SK-N-SH (cell line): ENCODE measurements at regions of chr15 and their contacts with region 1.

Region 1: GRCh38 chr15:89177633-89178306 is 43.6 kb downstream of the RLBP1 start:
- DNase-seq: peak; percentile 55
- H3K4me3 ChIP-seq: peak overlapping the region in 1 of 2 experiments; percentile 9; a peak in 1 of 4 replicates
- H3K27ac ChIP-seq: no peak overlapping the region
- H3K4me1 ChIP-seq: peaks cover 0 to 2% of the 10 kb centered on the region in 2 experiments; a peak in 1 of 4 replicates
- H3K27me3 ChIP-seq: no peaks in the 10 kb centered on the region
- CTCF ChIP-seq: peak; percentile 94
- EP300 ChIP-seq: no peak
- RAD21 ChIP-seq: peak; percentile 85

Region 2: DNA sequence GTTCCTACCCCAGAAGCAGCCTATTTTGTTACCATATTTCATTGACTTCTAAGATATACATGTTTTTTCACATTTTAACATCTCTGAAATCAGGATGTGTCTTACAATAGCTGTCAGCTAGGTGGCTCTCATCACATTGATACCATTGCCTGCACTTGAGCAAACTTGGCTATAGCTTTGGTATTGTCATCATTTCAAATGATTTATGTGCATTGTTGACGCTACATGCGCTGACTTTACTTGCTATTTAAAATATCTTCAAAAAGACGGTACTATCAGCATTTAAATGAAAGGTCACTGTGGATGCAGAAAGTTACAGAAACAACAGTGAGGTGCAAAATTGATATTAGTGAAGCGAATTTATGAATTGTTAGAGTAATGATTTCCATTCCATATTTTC is 143.5 kb before region 1 on chr15:
- CTCF ChIA-PET with region 1: interaction called, 12 read pairs
- POLR2A ChIA-PET with region 1: no interaction called
- DNase-seq: no peak
- H3K4me3 ChIP-seq: no peak overlapping the region
- H3K27ac ChIP-seq: no peak overlapping the region
- H3K4me1 ChIP-seq: no peaks in the 10 kb centered on the region
- H3K27me3 ChIP-seq: no peaks in the 10 kb centered on the region; the same call in 1 of the 2 replicates
- CTCF ChIP-seq: peak; percentile 47
- EP300 ChIP-seq: no peak
- RAD21 ChIP-seq: peak; percentile 56

Region 3: GRCh38 chr15:89087830-89088604 is 89.8 kb before region 1 on chr15 and contains the start of gene ABHD2:
- CTCF ChIA-PET with region 1: interaction called, 30 read pairs
- POLR2A ChIA-PET with region 1: no interaction called
- DNase-seq: peak; percentile 90
- H3K4me3 ChIP-seq: peak within 1 kb of the TSS; percentile 85 to 97
- H3K27ac ChIP-seq: peak within 1 kb of the TSS; percentile 97 to 98
- H3K4me1 ChIP-seq: peaks cover 31 to 70% of the 10 kb centered on the region in 2 experiments
- H3K27me3 ChIP-seq: no peaks in the 10 kb centered on the region
- CTCF ChIP-seq: no peak
- EP300 ChIP-seq: peak in 1 of 2 experiments; percentile 78; a peak in 3 of 4 replicates
- RAD21 ChIP-seq: no peak
- polyA plus RNA-seq, gene ABHD2: 19.2 and 25.7 TPM in 2 replicates

Region 4: DNA sequence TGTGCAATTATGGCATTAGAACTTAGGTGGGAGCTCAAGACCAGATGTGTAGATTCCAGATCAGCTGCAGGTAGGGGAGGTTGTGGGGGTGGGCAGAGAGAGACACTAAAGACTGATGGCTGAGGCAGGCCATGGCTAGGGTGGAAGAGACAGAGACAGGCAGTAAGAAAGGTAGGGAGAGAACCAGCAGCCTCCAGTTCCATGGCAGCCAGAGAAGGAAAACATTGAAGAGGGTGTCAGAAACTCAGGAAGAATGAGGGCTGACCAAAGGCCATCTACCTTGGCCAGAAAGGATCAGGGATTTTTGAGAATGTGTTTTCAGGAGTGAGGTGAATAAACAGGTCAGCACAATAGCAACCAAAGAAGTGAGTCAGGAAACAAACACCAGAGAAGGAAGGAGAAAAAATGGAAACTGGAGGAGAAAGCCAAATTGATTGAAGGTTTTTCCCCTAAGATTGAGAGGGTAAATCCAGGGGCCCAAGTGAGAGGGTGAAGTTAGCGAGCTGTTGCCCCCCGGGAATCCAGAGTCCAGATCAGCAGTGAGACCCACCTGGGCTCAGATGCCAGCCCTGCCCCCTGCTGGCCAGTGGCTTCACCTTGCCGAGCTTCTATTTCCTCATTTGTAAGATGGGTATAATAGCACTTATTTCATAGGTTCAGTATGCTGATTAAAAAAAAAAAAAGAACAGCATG is 48.5 kb before region 1 on chr15:
- CTCF ChIA-PET with region 1: interaction called, 27 read pairs
- POLR2A ChIA-PET with region 1: no interaction called
- DNase-seq: peak; percentile 59
- H3K4me3 ChIP-seq: no peak overlapping the region; a peak in 1 of 4 replicates
- H3K27ac ChIP-seq: no peak overlapping the region
- H3K4me1 ChIP-seq: peaks cover 0 to 4% of the 10 kb centered on the region in 2 experiments; a peak in 3 of 4 replicates
- H3K27me3 ChIP-seq: no peaks in the 10 kb centered on the region
- CTCF ChIP-seq: peak; percentile 87
- EP300 ChIP-seq: no peak
- RAD21 ChIP-seq: peak; percentile 72

Region 5: DNA sequence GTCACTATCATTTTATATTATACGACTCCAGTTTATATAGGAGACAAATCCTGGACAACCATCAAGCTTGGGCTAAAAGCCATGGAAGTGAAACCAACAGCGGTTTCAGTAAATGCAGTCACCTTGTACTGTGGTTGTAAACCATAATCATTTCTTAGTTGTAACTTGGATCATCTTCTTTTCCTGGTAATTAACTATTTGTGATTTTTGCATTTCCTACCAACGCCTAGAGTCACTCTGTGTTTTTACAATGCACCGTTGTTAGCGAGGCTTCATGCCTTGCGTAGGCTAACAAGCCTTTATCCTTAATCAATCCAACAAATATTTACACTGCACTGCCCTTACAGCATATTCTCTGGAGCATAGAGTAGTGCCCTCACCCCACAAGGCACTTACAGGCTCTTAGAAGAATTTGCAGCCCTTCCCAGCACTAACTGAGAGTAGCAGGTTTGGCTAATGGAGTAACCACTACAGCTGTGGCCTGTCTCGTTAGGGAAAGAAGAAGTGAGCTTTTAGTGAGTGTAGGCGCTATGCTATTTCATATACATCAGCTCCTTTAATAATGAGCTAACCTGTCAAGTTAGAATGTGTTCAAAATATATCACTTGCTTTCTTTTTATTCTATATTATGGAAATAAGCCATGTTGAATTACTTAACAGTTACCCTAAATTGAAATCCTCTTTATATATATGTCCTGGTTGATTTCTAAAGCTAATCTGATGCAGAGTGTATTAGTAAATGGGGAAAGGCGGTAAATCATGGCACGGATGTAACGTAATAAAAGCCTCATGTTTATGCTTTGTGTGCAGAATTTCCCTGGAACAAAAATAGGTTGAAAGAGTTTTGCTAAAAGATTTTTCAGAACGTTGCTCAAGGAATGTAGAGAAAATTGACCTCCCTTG is 26.8 kb before region 1 on chr15:
- CTCF ChIA-PET with region 1: interaction called, 21 read pairs
- POLR2A ChIA-PET with region 1: no interaction called
- DNase-seq: no peak
- H3K4me3 ChIP-seq: no peak overlapping the region
- H3K27ac ChIP-seq: no peak overlapping the region; a peak in 1 of 4 replicates
- H3K4me1 ChIP-seq: no peaks in the 10 kb centered on the region; a peak in 1 of 4 replicates
- H3K27me3 ChIP-seq: no peaks in the 10 kb centered on the region
- CTCF ChIP-seq: no peak
- EP300 ChIP-seq: no peak
- RAD21 ChIP-seq: no peak

Region 6: DNA sequence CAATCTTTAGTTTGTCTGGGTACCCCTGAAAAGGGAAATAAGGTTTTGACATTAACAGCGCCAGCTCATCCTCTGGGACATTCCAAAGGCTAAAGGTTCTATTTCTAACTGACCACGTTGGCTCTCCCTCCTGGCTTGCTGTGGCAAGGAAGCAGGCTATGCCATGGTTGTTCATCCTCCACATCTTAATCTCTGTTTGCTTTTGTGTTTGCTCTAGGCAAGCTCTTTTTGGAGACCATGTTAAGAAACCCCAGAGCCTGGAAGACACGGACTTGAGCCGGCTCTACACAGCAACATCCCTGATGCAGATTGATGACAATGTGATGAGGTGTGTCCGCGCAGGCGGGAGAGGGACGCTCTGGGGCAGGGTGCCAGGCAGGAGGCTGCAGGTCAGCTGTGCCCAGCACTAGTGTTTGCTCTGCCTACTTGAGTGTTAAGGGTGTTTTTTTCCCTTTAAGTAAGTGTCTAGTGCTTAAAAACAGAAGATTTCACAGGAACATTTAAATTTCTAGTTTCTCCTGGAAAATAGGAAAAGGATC is 10.3 kb after region 1 on chr15:
- CTCF ChIA-PET with region 1: interaction called, 60 read pairs
- POLR2A ChIA-PET with region 1: no interaction called
- DNase-seq: no peak
- H3K4me3 ChIP-seq: no peak overlapping the region
- H3K27ac ChIP-seq: no peak overlapping the region
- H3K4me1 ChIP-seq: peaks cover 4 to 9% of the 10 kb centered on the region in 2 experiments; a peak in 1 of 4 replicates
- H3K27me3 ChIP-seq: no peaks in the 10 kb centered on the region
- CTCF ChIP-seq: no peak
- EP300 ChIP-seq: no peak
- RAD21 ChIP-seq: no peak

Region 7: DNA sequence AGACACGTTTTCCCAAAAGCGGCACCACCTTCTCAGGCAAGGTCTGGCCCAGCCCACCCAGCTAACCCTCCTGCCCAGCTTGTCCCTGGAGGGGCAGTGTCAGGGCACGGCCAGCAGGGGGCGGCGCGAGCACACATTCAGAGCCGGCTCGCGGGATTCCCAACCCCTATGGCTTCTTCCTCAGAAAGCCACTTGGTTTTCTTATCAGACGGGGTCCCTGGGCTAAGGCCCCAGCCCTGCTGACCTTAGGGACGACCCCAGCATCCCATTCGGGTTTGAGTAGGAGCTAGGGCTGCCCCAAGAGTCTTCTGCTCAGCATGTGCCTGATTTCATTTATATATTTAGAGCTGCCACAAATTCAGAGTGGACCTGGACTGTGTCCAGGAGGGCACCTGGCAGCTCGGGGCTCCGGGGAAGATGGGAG is 29.1 kb after region 1 on chr15:
- CTCF ChIA-PET with region 1: interaction called, 22 read pairs
- POLR2A ChIA-PET with region 1: no interaction called
- DNase-seq: peak; percentile 93
- H3K4me3 ChIP-seq: peak overlapping the region; percentile 32 to 36; a peak in 3 of 4 replicates
- H3K27ac ChIP-seq: no peak overlapping the region
- H3K4me1 ChIP-seq: no peaks in the 10 kb centered on the region; a peak in 1 of 4 replicates
- H3K27me3 ChIP-seq: no peaks in the 10 kb centered on the region
- CTCF ChIP-seq: peak; percentile 96
- EP300 ChIP-seq: no peak
- RAD21 ChIP-seq: peak; percentile 85